Lower leg skin (tissue), 4 donors: ENCODE measurements at regions of chr13 and their contacts with region 1.

Region 1: GRCh38 chr13:63124863-63125262 is 1709.2 kb upstream of the PCDH20 start:
- DNase-seq: no peak
- H3K4me3 ChIP-seq: no peak overlapping the region
- CTCF ChIP-seq: no peak
- POLR2A ChIP-seq: no peak

Region 2: GRCh38 chr13:62096652-62097051 is 1028.2 kb before region 1 on chr13:
- intact Hi-C with region 1: no loop called
- DNase-seq: no peak
- H3K4me3 ChIP-seq: no peak overlapping the region
- CTCF ChIP-seq: no peak
- POLR2A ChIP-seq: no peak

Region 3: GRCh38 chr13:63700350-63700749 is 575.5 kb after region 1 on chr13:
- intact Hi-C with region 1: loop called (anchors 10 kb)
- DNase-seq: no peak
- H3K4me3 ChIP-seq: no peak overlapping the region
- CTCF ChIP-seq: no peak
- POLR2A ChIP-seq: no peak